Heart right ventricle (tissue), 16 donors: ENCODE measurements at regions of chr10 and their contacts with region 1.

Region 1: DNA sequence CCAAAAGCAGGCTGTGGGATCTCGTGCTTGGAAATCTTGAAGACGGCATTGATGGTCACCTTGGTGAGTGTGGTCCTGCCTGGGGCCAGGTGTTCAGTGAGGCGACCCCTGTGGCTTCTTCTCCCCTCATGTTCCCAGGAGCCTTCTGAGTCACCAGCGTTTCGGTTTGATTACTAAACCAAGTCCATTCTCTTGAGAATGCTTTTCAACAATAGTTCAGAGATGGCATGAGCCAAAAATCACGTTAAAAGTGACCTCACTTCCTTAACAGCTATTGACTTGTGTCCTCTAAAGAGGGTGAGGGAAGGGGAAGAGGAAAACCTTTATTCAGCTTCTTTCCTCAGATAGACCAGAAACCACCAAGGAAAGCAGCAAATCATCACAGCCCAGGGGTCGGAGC is 315.2 kb downstream of the GATA3 start:
- DNase-seq: peak in 1 of 2 donors; percentile 40
- ATAC-seq: peak in 7 of 8 donors; percentile 65 to 91 (median 84)
- H3K4me3 ChIP-seq: no peak overlapping the region
- H3K27ac ChIP-seq: peak overlapping the region; percentile 31 to 85 (median 72)
- H3K4me1 ChIP-seq: peaks cover 0 to 21% (median 0%) of the 10 kb centered on the region in 9 donors
- H3K27me3 ChIP-seq: no peaks in the 10 kb centered on the region
- CTCF ChIP-seq: no peak

Region 2: DNA sequence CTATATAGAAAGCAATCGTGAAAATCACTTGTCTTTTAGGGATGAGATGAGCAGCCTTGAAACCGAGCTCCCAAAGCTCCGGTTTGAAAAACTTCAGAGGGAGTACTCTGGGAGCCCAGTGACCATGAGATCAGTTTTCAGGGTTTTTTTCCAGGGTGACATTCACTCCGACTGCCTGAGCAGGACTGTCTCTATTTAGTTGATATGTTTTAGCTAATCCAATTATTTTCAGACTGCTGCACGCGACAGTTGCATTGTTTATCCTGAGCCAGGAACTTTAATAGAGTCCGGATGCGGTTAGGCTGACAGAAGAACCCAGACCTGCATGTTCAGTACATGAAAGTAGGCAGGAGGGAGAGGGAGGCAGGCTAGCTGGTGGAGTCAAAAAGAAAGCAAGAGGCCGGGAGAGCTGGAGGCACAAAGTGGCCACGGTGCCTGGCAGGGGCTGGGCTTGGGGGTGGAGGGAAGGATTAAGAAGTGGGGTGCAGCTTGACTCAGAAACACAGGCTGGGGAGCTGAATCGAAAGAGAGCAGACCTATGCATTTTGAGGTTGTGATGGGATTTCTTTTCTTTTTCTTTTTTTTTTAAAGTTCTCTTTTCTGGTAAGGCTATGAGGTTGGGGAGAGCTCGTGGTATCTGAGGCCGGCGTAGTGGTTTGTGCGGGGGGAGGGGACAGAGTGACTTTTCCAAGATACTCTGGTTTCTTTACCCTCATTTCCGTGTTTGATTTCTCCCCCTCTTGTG is 309.5 kb before region 1 on chr10:
- intact Hi-C with region 1: loop called in 4 of 10 experiments (anchors 10 kb)
- DNase-seq: no peak
- ATAC-seq: peak in 1 of 8 donors; percentile 34
- H3K4me3 ChIP-seq: peak overlapping the region in 1 of 10 donors; percentile 15
- H3K27ac ChIP-seq: peak overlapping the region in 1 of 10 donors; percentile 74
- H3K4me1 ChIP-seq: peaks cover 0 to 64% (median 33%) of the 10 kb centered on the region in 9 donors
- H3K27me3 ChIP-seq: peaks cover 0 to 98% (median 83%) of the 10 kb centered on the region in 7 donors
- CTCF ChIP-seq: no peak

Region 3: GRCh38 chr10:8520382-8520781 is 150.7 kb after region 1 on chr10:
- intact Hi-C with region 1: no loop called
- DNase-seq: no peak
- ATAC-seq: no peak
- H3K4me3 ChIP-seq: no peak overlapping the region
- H3K27ac ChIP-seq: no peak overlapping the region
- H3K4me1 ChIP-seq: no peaks in the 10 kb centered on the region
- H3K27me3 ChIP-seq: peaks cover 0 to 15% (median 0%) of the 10 kb centered on the region in 7 donors
- CTCF ChIP-seq: peak in 1 of 9 donors; percentile 6

Region 4: GRCh38 chr10:8600192-8600591 is 230.5 kb after region 1 on chr10:
- intact Hi-C with region 1: no loop called
- DNase-seq: no peak
- ATAC-seq: no peak
- H3K4me3 ChIP-seq: no peak overlapping the region
- H3K27ac ChIP-seq: no peak overlapping the region
- H3K4me1 ChIP-seq: no peaks in the 10 kb centered on the region
- H3K27me3 ChIP-seq: no peaks in the 10 kb centered on the region
- CTCF ChIP-seq: no peak

Region 5: DNA sequence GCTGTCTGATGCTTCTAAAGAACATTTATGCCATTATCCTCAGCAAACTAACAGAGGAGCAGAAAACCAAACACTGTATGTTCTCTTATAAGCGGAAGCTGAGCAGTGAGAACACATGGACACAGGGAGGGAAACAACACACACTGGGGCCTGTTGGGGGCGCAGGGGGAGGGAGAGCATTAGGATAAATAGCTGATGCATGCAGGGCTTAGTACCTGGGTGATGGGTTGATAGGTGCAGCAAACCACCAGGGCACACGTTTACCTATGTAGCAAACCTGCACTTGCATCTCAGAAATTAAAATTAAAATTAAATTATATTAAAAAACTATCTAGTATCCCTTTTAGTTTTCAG is 538.4 kb after region 1 on chr10:
- intact Hi-C with region 1: loop called in 1 of 10 experiments (anchors 10 kb)
- DNase-seq: no peak
- ATAC-seq: no peak
- H3K4me3 ChIP-seq: no peak overlapping the region
- H3K27ac ChIP-seq: no peak overlapping the region
- H3K4me1 ChIP-seq: no peaks in the 10 kb centered on the region
- H3K27me3 ChIP-seq: peaks cover 0 to 5% (median 0%) of the 10 kb centered on the region in 7 donors
- CTCF ChIP-seq: no peak